MCF 10A (cell line): ENCODE measurements at regions of chr22 and their contacts with region 1.

Region 1: GRCh38 chr22:24996420-24996952 is 44.0 kb downstream of the KIAA1671 start:
- DNase-seq: peak; percentile 58
- H3K4me3 Mint-ChIP-seq: peak overlapping the region; percentile 24
- H3K27ac Mint-ChIP-seq: peak overlapping the region; percentile 73
- H3K4me1 Mint-ChIP-seq: peaks cover 55% of the 10 kb centered on the region
- H3K27me3 Mint-ChIP-seq: no peaks in the 10 kb centered on the region
- CTCF ChIP-seq: no peak

Region 2: DNA sequence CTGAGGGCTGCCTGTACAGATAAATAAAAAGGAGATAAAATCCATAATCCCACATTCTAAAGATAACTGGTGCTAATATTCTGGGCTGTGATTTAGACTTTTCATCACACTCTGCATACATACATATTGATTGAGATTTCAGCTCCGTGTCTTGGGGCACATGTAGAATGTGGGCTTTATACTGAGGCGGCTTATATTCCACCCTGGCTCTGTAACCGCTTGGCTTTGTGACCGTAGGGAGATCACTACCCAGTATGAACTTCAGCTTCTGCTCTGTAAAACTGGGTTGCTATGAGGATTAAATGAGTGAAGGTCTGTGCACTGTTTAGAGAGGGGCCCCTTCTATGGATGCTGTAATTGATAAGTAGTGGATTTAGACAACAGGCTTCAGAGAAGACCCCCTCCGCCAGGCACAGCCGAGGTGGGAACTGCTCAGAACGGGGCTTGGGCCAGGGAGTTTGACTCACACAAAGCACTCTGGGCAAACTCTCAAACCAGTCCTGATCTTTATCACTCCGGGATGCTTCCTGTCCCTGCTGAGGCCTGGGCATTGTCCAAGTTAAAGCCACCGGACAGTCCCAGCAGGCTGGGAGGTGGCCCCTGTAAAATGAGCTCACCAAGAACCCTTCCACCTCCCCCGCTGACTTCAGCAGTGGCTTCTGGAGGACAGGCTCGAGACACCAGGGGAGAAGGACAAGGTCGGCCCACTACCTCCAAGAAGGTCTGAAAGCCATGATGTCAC is 26.8 kb before region 1 on chr22:
- CTCF ChIA-PET with region 1: interaction called, 6 read pairs
- POLR2A ChIA-PET with region 1: interaction called, 468 read pairs
- intact Hi-C with region 1: loop called (anchors 1 kb)
- DNase-seq: peak; percentile 71
- H3K4me3 Mint-ChIP-seq: peak overlapping the region; percentile 30
- H3K27ac Mint-ChIP-seq: peak overlapping the region; percentile 89
- H3K4me1 Mint-ChIP-seq: peaks cover 51% of the 10 kb centered on the region
- H3K27me3 Mint-ChIP-seq: no peaks in the 10 kb centered on the region
- CTCF ChIP-seq: no peak

Region 3: GRCh38 chr22:25007444-25008106 is 11.1 kb after region 1 on chr22:
- CTCF ChIA-PET with region 1: interaction called, 10 read pairs
- POLR2A ChIA-PET with region 1: interaction called, 5 read pairs
- intact Hi-C with region 1: no loop called
- DNase-seq: no peak
- H3K4me3 Mint-ChIP-seq: no peak overlapping the region
- H3K27ac Mint-ChIP-seq: peak overlapping the region; percentile 86
- H3K4me1 Mint-ChIP-seq: peaks cover 11% of the 10 kb centered on the region
- H3K27me3 Mint-ChIP-seq: no peaks in the 10 kb centered on the region
- CTCF ChIP-seq: no peak

Region 4: GRCh38 chr22:25027959-25028840 is 31.7 kb after region 1 on chr22:
- CTCF ChIA-PET with region 1: interaction called, 4 read pairs
- POLR2A ChIA-PET with region 1: interaction called, 6 read pairs
- intact Hi-C with region 1: loop called (anchors 5 kb)
- DNase-seq: no peak
- H3K4me3 Mint-ChIP-seq: no peak overlapping the region
- H3K27ac Mint-ChIP-seq: peak overlapping the region; percentile 79
- H3K4me1 Mint-ChIP-seq: peaks cover 28% of the 10 kb centered on the region
- H3K27me3 Mint-ChIP-seq: no peaks in the 10 kb centered on the region
- CTCF ChIP-seq: peak; percentile 28

Region 5: DNA sequence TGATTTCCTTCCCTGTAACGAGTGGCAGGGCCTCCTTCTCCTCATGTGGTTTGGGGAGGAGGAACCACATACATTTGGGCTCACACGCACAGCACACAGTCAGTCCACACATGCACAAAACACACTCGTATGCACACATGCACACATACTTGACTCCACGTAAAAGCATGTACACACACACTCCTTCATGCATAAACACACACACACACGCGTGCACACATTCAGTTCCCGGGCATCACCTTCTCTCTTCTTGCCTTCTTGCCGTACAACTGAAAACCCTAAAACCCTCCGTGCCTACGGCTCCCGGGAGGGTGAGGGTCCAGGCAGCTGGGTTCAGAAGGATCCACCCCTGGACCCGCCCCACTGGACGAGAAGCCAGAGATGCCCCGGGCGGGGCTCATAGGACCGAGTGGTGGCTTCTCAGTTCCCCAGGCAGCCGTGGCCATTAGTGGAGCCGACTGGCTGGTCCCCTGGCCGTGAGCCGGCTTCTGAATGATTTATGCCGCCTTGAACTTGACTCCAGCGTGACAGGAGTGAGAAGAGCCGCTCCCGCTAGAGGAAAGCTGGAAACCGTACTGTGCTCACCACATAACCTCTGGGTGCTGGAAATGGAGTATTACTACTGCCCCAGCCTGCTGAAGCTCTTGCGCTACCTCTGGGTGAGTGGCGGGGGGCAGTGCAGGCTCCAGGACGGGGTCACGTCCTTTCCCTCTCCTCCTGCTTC is 73.4 kb after region 1 on chr22:
- CTCF ChIA-PET with region 1: no interaction called
- POLR2A ChIA-PET with region 1: no interaction called
- intact Hi-C with region 1: no loop called
- DNase-seq: no peak
- H3K4me3 Mint-ChIP-seq: no peak overlapping the region
- H3K27ac Mint-ChIP-seq: peak overlapping the region; percentile 51
- H3K4me1 Mint-ChIP-seq: peaks cover 6% of the 10 kb centered on the region
- H3K27me3 Mint-ChIP-seq: no peaks in the 10 kb centered on the region
- CTCF ChIP-seq: no peak